ENCODE measurements at regions of chr3 and their contacts with region 1.

Region 1: GRCh38 chr3:132399054-132399929 is 18.0 kb upstream of the DNAJC13 start:
- DNase-seq: peak; percentile 58
- H3K4me3 ChIP-seq: no peak overlapping the region
- H3K27ac ChIP-seq: no peak overlapping the region
- H3K4me1 ChIP-seq: peaks cover 3% of the 10 kb centered on the region
- H3K27me3 ChIP-seq: no peaks in the 10 kb centered on the region
- CTCF ChIP-seq: peak; percentile 72 to 74
- POLR2A ChIP-seq: no peak

Region 2: DNA sequence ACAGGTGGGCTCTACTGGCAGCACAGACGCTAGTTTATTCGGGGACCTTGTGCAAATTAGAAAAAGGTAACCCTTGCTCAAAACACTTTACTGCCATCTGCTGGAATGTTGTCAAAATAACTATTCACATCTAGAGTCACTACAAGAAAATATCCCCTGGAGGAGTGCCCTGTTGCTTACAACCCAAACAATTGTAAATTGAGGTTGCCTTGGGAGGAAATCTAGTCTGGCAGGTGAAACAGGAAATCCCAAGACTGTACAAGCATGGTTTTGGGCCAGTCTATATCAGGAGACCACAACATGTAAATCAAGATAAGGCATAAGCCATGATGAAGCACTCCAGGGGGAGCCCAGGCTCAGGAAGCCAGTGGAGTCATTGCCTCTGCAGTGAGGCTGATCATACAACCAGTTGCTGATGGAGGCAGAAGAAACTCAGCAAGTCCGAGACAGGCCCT is 218.9 kb before region 1 on chr3:
- CTCF ChIA-PET with region 1: no interaction called
- POLR2A ChIA-PET with region 1: no interaction called
- dilution Hi-C with region 1: no loop called
- intact Hi-C with region 1: loop called (anchors 1 kb)
- DNase-seq: peak; percentile 62
- H3K4me3 ChIP-seq: no peak overlapping the region
- H3K27ac ChIP-seq: no peak overlapping the region
- H3K4me1 ChIP-seq: no peaks in the 10 kb centered on the region
- H3K27me3 ChIP-seq: peaks cover 9 to 22% of the 10 kb centered on the region in 2 experiments
- CTCF ChIP-seq: peak; percentile 37 to 42
- POLR2A ChIP-seq: no peak

Region 3: DNA sequence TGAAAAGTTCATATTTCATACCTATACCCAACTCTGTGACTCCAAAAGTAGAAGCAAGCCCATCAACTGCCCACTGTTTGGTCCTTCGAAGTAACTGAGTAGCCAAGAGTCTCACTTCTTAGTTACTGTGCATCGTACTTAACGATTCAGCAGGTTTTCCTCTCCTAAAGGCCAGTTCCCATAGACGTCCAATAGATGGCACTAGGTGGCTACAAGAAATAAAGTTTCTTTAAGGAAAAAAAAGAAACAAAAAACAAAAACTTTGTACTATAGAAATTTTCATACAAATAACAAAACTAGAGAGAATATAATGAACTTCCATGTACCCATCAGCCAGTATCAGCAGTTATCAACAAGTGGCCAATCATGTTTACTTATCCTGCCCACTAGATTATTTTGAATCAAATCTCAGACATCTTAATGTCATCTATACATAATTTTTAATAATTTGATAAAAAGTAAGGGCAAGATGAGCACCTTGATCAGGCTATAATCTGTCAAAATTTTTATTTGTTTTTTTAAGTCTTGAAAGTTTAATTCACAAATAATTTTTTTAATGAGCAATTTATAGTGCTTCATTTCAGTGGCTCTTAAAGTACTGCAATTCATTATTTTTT is 145.9 kb before region 1 on chr3:
- CTCF ChIA-PET with region 1: interaction called, 47 read pairs
- POLR2A ChIA-PET with region 1: no interaction called
- dilution Hi-C with region 1: no loop called
- intact Hi-C with region 1: loop called (anchors 1 kb)
- DNase-seq: peak; percentile 63
- H3K4me3 ChIP-seq: no peak overlapping the region
- H3K27ac ChIP-seq: no peak overlapping the region
- H3K4me1 ChIP-seq: no peaks in the 10 kb centered on the region
- H3K27me3 ChIP-seq: peaks cover 0 to 3% of the 10 kb centered on the region in 2 experiments
- CTCF ChIP-seq: peak; percentile 57 to 64
- POLR2A ChIP-seq: no peak

Region 4: GRCh38 chr3:132268956-132269355 is 130.3 kb before region 1 on chr3:
- CTCF ChIA-PET with region 1: no interaction called
- POLR2A ChIA-PET with region 1: no interaction called
- dilution Hi-C with region 1: no loop called
- intact Hi-C with region 1: loop called (anchors 1 kb)
- DNase-seq: peak; percentile 10
- H3K4me3 ChIP-seq: no peak overlapping the region
- H3K27ac ChIP-seq: no peak overlapping the region
- H3K4me1 ChIP-seq: no peaks in the 10 kb centered on the region
- H3K27me3 ChIP-seq: no peaks in the 10 kb centered on the region
- CTCF ChIP-seq: peak in 1 of 2 donors; percentile 44
- POLR2A ChIP-seq: no peak

Region 5: GRCh38 chr3:132343018-132343612 is 56.2 kb before region 1 on chr3:
- CTCF ChIA-PET with region 1: interaction called, 150 read pairs
- POLR2A ChIA-PET with region 1: no interaction called
- dilution Hi-C with region 1: no loop called
- intact Hi-C with region 1: no loop called
- DNase-seq: peak; percentile 56
- H3K4me3 ChIP-seq: no peak overlapping the region
- H3K27ac ChIP-seq: no peak overlapping the region
- H3K4me1 ChIP-seq: no peaks in the 10 kb centered on the region
- H3K27me3 ChIP-seq: peaks cover 10 to 17% of the 10 kb centered on the region in 2 experiments
- CTCF ChIP-seq: peak; percentile 57 to 69
- POLR2A ChIP-seq: no peak

Region 6: GRCh38 chr3:132352541-132353143 is 46.6 kb before region 1 on chr3:
- CTCF ChIA-PET with region 1: interaction called, 150 read pairs
- POLR2A ChIA-PET with region 1: no interaction called
- dilution Hi-C with region 1: no loop called
- intact Hi-C with region 1: loop called (anchors 1 kb)
- DNase-seq: peak; percentile 77
- H3K4me3 ChIP-seq: no peak overlapping the region
- H3K27ac ChIP-seq: no peak overlapping the region
- H3K4me1 ChIP-seq: no peaks in the 10 kb centered on the region
- H3K27me3 ChIP-seq: peaks cover 0 to 4% of the 10 kb centered on the region in 2 experiments
- CTCF ChIP-seq: peak; percentile 78 to 84
- POLR2A ChIP-seq: no peak

Region 7: GRCh38 chr3:132416807-132417694 is 17.8 kb after region 1 on chr3 and contains the start of gene DNAJC13:
- CTCF ChIA-PET with region 1: interaction called, 5 read pairs
- POLR2A ChIA-PET with region 1: no interaction called
- dilution Hi-C with region 1: no loop called
- intact Hi-C with region 1: loop called (anchors 1 kb)
- DNase-seq: peak; percentile 96
- H3K4me3 ChIP-seq: peak within 1 kb of the TSS; percentile 87 to 100 (median 89)
- H3K27ac ChIP-seq: peak within 1 kb of the TSS; percentile 59
- H3K4me1 ChIP-seq: peaks cover 20% of the 10 kb centered on the region
- H3K27me3 ChIP-seq: no peaks in the 10 kb centered on the region
- CTCF ChIP-seq: no peak
- POLR2A ChIP-seq: no peak
- total RNA-seq, gene DNAJC13: 64.0 and 71.7 TPM in 2 replicates

Region 8: DNA sequence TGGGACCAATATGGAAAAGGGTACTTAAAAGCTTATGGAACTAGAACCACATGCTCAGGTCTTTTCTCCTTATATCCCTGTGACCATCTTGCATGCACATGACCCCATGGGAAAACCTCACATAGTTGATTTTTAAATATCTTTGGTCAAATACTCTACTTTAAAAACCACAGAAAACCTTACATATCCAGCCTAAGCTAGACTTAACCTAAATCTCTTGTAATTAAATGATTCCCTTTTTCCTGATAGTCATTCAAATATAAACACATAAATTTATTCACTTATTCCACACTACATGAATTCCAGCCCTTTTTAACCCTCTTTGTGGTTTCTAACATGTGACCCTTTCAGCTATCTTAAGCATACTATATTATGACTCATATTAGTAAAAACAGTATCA is 64.8 kb after region 1 on chr3:
- CTCF ChIA-PET with region 1: no interaction called
- POLR2A ChIA-PET with region 1: no interaction called
- dilution Hi-C with region 1: no loop called
- intact Hi-C with region 1: no loop called
- DNase-seq: no peak
- H3K4me3 ChIP-seq: no peak overlapping the region
- H3K27ac ChIP-seq: no peak overlapping the region
- H3K4me1 ChIP-seq: no peaks in the 10 kb centered on the region
- H3K27me3 ChIP-seq: no peaks in the 10 kb centered on the region
- CTCF ChIP-seq: no peak
- POLR2A ChIP-seq: no peak

Region 9: DNA sequence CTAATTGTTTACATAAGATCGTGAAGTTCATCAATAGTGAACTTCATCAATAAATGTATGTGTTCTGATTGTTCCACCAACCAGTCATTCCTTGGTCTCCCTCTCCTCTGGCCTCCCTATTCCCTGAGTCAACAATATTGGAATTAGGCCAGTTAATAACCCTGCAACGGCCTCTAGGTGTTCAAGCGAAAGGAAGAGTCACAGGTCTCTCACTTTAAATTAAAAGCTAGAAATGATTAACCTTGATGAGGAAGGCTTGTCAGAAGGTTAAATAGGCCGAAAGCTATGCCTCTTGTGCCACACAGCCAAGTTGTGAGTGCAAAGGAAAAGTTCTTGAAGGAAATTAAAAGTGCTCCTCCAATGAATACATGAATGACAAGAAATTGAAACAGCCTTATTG is 108.4 kb after region 1 on chr3:
- CTCF ChIA-PET with region 1: no interaction called
- POLR2A ChIA-PET with region 1: no interaction called
- dilution Hi-C with region 1: no loop called
- intact Hi-C with region 1: no loop called
- DNase-seq: no peak
- H3K4me3 ChIP-seq: no peak overlapping the region
- H3K27ac ChIP-seq: no peak overlapping the region
- H3K4me1 ChIP-seq: no peaks in the 10 kb centered on the region
- H3K27me3 ChIP-seq: no peaks in the 10 kb centered on the region
- CTCF ChIP-seq: no peak
- POLR2A ChIP-seq: no peak